Heart left ventricle (tissue), 16 donors: ENCODE measurements at regions of chr7 and their contacts with region 1.

Region 1: GRCh38 chr7:107201795-107202450 is 33.1 kb downstream of the HBP1 start:
- DNase-seq: peak; percentile 44 to 75 (median 66)
- ATAC-seq: peak; percentile 78 to 92 (median 92)
- H3K4me3 ChIP-seq: no peak overlapping the region
- H3K27ac ChIP-seq: peak overlapping the region in 8 of 12 donors; percentile 7 to 56 (median 38)
- H3K4me1 ChIP-seq: peaks cover 0 to 12% (median 2%) of the 10 kb centered on the region in 12 donors
- H3K27me3 ChIP-seq: no peaks in the 10 kb centered on the region
- CTCF ChIP-seq: peak; percentile 32 to 70 (median 56)
- POLR2A ChIP-seq: no peak

Region 2: DNA sequence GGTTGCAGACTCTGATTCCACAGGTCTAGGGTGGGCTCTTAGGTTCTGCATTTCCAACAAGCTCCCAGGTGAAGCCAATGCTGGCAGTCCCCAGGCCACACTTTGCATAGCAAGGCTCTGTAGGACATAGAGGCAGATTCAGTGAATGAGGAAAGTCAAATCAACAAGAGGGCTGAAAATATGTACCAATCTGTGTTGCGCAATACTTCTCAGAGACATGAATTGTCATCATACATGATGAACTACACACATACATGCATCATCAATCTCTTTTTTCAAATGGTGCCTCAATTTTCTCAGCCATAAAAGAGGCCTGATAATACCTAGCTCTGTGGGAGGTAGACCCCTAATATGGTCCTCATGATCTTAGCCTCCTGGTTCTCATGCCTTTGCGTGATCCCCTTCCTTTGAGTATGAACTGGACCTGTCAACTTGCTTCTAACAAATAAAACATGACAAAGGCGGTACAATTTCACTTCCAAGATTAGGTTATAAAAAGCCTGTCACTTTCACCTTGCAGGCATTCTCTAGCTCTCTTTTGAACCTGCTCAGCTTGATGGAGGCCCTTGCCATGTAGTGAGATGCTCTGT is 287.8 kb before region 1 on chr7:
- intact Hi-C with region 1: no loop called
- DNase-seq: no peak
- ATAC-seq: no peak
- H3K4me3 ChIP-seq: no peak overlapping the region
- H3K27ac ChIP-seq: no peak overlapping the region
- H3K4me1 ChIP-seq: peaks cover 0 to 3% (median 0%) of the 10 kb centered on the region in 12 donors
- H3K27me3 ChIP-seq: no peaks in the 10 kb centered on the region
- CTCF ChIP-seq: no peak
- POLR2A ChIP-seq: no peak

Region 3: GRCh38 chr7:107394831-107395230 is 192.9 kb after region 1 on chr7:
- intact Hi-C with region 1: loop called in 1 of 10 experiments (anchors 10 kb)
- DNase-seq: no peak
- ATAC-seq: no peak
- H3K4me3 ChIP-seq: no peak overlapping the region
- H3K27ac ChIP-seq: no peak overlapping the region
- H3K4me1 ChIP-seq: peaks cover 0 to 7% (median 0%) of the 10 kb centered on the region in 12 donors
- H3K27me3 ChIP-seq: no peaks in the 10 kb centered on the region
- CTCF ChIP-seq: no peak
- POLR2A ChIP-seq: no peak

Region 4: DNA sequence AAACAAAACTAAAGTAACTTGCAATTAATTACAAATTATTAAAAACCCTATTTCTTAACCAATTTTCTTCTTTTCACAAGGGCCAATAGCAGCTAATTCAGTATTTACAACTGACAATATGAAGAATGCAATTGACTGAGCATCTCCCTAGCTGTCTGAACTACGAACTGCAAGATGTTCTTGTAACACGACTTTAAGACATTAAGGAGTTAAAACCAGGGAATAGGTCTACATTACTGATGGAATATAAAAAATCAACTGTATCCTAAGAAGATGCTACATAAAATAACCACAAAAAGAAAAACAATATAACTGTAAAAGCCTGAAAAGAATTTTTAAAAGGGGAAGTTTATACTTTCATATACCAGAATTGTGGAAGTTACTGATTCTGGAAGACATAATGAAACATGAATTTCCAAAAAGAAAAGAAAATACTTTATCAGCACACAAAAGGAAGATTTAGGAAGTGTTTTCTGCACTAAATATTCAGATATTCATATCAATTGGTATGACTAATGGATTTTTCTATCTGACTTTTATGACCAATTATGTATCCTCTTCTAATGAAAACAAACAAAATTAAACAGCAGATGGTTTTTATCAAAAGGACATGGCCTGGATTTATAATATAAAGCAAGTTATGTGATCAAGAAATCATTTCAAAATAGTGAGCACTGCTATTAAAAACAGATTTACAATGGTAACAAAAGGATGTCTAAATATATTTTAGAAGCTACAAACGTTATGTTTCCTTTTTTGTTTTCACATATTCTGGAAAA is 269.6 kb after region 1 on chr7:
- intact Hi-C with region 1: loop called in 3 of 10 experiments (anchors 5 to 10 kb)
- DNase-seq: no peak
- ATAC-seq: peak; percentile 35 to 62 (median 48)
- H3K4me3 ChIP-seq: peak overlapping the region in 11 of 12 donors; percentile 6 to 56 (median 42)
- H3K27ac ChIP-seq: peak overlapping the region; percentile 12 to 84 (median 74)
- H3K4me1 ChIP-seq: peaks cover 0 to 18% (median 0%) of the 10 kb centered on the region in 12 donors
- H3K27me3 ChIP-seq: no peaks in the 10 kb centered on the region
- CTCF ChIP-seq: peak in 7 of 12 donors; percentile 9 to 44 (median 34)
- POLR2A ChIP-seq: no peak

Region 5: GRCh38 chr7:107594961-107595737 is 393.2 kb after region 1 on chr7:
- intact Hi-C with region 1: loop called in 2 of 10 experiments (anchors 10 kb)
- DNase-seq: peak in 2 of 5 donors; percentile 10 to 36
- ATAC-seq: peak; percentile 70 to 93 (median 89)
- H3K4me3 ChIP-seq: no peak overlapping the region
- H3K27ac ChIP-seq: peak overlapping the region; percentile 27 to 83 (median 68)
- H3K4me1 ChIP-seq: peaks cover 9 to 61% (median 32%) of the 10 kb centered on the region in 12 donors
- H3K27me3 ChIP-seq: no peaks in the 10 kb centered on the region
- CTCF ChIP-seq: no peak
- POLR2A ChIP-seq: no peak

Region 6: GRCh38 chr7:107879400-107880035 is 677.6 kb after region 1 on chr7:
- intact Hi-C with region 1: loop called in 2 of 10 experiments (anchors 10 kb)
- DNase-seq: no peak
- ATAC-seq: peak in 3 of 4 donors; percentile 77 to 85 (median 79)
- H3K4me3 ChIP-seq: no peak overlapping the region
- H3K27ac ChIP-seq: no peak overlapping the region
- H3K4me1 ChIP-seq: peaks cover 0 to 20% (median 0%) of the 10 kb centered on the region in 12 donors
- H3K27me3 ChIP-seq: no peaks in the 10 kb centered on the region
- CTCF ChIP-seq: peak; percentile 59 to 90 (median 68)
- POLR2A ChIP-seq: no peak